Activated CD8-positive, alpha-beta T cell treated with anti-CD3 and anti-CD28 coated beads for 36 hours (primary cell): ENCODE measurements at regions of chr19 and their contacts with region 1.

Region 1: DNA sequence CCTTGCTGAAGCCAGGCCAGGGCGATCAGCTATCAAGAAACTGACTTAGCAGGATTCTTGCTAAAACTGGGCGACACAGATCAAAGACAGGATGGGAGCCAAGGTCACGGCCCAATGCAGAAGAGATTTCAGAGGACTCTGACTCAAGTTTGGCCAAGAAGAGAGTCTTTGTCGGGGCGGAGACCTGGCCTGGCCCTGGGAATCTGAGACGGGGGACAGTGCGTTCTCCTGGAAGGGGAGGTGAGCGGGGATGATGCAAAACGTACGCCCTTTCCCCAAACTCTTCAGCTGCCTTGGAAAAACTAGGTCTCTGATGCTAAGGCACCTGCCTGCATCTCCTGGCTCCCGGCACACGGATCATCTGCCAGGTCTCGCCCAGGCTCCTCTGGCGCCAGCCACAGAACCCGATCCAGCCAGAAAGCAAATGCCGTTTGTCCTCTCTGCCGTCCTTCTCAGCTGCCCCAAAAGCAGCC is 9.8 kb downstream of the MVB12A start:
- DNase-seq: no peak
- ATAC-seq: no peak
- H3K4me3 Mint-ChIP-seq: no peak overlapping the region
- H3K27ac Mint-ChIP-seq: no peak overlapping the region
- H3K4me1 Mint-ChIP-seq: peaks cover 2% of the 10 kb centered on the region
- H3K27me3 Mint-ChIP-seq: no peaks in the 10 kb centered on the region
- CTCF ChIP-seq: no peak

Region 2: GRCh38 chr19:17441241-17442021 is 11.8 kb after region 1 on chr19:
- CTCF ChIA-PET with region 1: interaction called, 23 read pairs
- POLR2A ChIA-PET with region 1: no interaction called
- intact Hi-C with region 1: no loop called
- DNase-seq: peak; percentile 57
- ATAC-seq: peak; percentile 93
- H3K4me3 Mint-ChIP-seq: no peak overlapping the region
- H3K27ac Mint-ChIP-seq: no peak overlapping the region
- H3K4me1 Mint-ChIP-seq: no peaks in the 10 kb centered on the region
- H3K27me3 Mint-ChIP-seq: no peaks in the 10 kb centered on the region
- CTCF ChIP-seq: peak; percentile 71